Dorsolateral prefrontal cortex (tissue), 120 donors: ENCODE measurements at regions of chr11 and their contacts with region 1.

Region 1: GRCh38 chr11:111911563-111912401 is at the start of gene CRYAB:
- DNase-seq: peak; percentile 87 to 97 (median 94)
- H3K4me3 ChIP-seq: peak within 1 kb of the TSS; percentile 44 to 88 (median 68)
- H3K27ac ChIP-seq: peak within 1 kb of the TSS; percentile 92 to 100 (median 99)
- H3K27me3 ChIP-seq: no peaks in the 10 kb centered on the region
- CTCF ChIP-seq: peak in 1 of 56 donors; percentile 7
- total RNA-seq, gene CRYAB: 265 to 3,917 (median 1,020) TPM

Region 2: GRCh38 chr11:111926505-111927391 is 15.0 kb after region 1 on chr11:
- intact Hi-C with region 1: loop called (anchors 1 to 2 kb)
- DNase-seq: peak; percentile 93 to 99 (median 98)
- H3K4me3 ChIP-seq: peak overlapping the region; percentile 25 to 83 (median 61)
- H3K27ac ChIP-seq: peak overlapping the region; percentile 58 to 97 (median 92)
- H3K27me3 ChIP-seq: no peaks in the 10 kb centered on the region
- CTCF ChIP-seq: peak in 36 of 56 donors; percentile 3 to 53 (median 26)

Region 3: GRCh38 chr11:112004389-112004788 is 92.6 kb after region 1 on chr11:
- intact Hi-C with region 1: no loop called
- DNase-seq: no peak
- H3K4me3 ChIP-seq: no peak overlapping the region
- H3K27ac ChIP-seq: no peak overlapping the region
- H3K27me3 ChIP-seq: no peaks in the 10 kb centered on the region
- CTCF ChIP-seq: peak in 7 of 56 donors; percentile 9 to 44 (median 17)